Vagina (tissue), 2 donors: ENCODE measurements at regions of chr10 and their contacts with region 1.

Region 1: DNA sequence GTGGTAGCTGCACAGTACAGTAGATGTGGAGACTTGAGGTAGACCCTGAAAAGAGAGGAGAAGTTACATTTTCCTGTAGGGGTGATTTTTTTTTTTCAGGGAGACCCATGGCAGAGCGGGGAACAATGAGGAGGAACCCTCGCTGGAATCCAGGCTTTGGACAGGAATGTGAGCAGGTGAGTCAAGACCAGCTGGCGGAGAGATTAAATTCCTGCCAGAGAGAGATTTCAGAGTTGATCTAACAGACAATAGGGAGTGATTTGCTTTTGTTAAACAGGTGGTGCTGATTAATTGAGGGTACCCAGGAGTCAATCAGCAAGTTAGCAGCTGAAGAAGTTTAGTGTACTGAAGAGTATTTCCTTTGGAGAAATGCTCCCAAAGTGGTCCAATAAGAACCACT is 41.6 kb upstream of the MINDY3 start:
- DNase-seq: no peak
- H3K4me3 ChIP-seq: no peak overlapping the region
- H3K27ac ChIP-seq: no peak overlapping the region
- H3K4me1 ChIP-seq: no peaks in the 10 kb centered on the region
- H3K27me3 ChIP-seq: no peaks in the 10 kb centered on the region
- CTCF ChIP-seq: no peak
- POLR2A ChIP-seq: no peak

Region 2: GRCh38 chr10:14459665-14460064 is 1442.2 kb before region 1 on chr10:
- intact Hi-C with region 1: loop called (anchors 5 kb)
- DNase-seq: no peak
- H3K4me3 ChIP-seq: no peak overlapping the region
- H3K27ac ChIP-seq: no peak overlapping the region
- H3K4me1 ChIP-seq: no peaks in the 10 kb centered on the region
- H3K27me3 ChIP-seq: no peaks in the 10 kb centered on the region
- CTCF ChIP-seq: no peak
- POLR2A ChIP-seq: no peak

Region 3: GRCh38 chr10:14560274-14560673 is 1341.6 kb before region 1 on chr10:
- intact Hi-C with region 1: no loop called
- DNase-seq: no peak
- H3K4me3 ChIP-seq: no peak overlapping the region
- H3K27ac ChIP-seq: no peak overlapping the region
- H3K4me1 ChIP-seq: peaks cover 37% of the 10 kb centered on the region
- H3K27me3 ChIP-seq: no peaks in the 10 kb centered on the region
- CTCF ChIP-seq: no peak
- POLR2A ChIP-seq: no peak

Region 4: DNA sequence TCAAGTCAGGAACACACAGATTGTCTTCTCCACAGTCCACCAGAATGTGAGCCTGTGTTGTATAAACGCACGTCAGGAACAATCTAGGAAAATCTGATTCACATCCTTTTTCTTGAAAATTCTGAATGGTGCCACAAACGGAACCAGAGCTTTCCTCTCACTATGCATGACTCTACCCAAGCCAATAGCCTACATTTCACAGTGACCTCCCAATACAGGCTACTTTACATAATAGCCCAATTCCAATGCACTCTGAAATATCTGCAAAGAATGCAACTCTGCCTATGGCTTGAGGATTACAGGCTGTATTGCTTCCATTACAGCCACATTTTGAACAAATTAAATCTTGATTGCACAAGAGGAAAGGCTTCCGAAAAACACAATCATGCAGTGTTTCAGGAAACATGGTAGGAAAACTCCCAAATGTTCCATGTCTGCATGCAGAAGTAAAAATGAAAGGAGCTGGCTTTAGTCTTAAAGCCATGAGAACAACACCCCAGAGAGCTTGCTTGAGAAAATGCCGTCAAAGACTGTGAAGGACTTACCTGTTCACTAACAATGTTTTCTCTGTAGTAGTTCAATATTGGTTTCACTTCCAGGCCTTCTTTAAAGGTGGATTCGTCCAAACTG is 296.0 kb before region 1 on chr10:
- intact Hi-C with region 1: no loop called
- DNase-seq: no peak
- H3K4me3 ChIP-seq: no peak overlapping the region
- H3K27ac ChIP-seq: no peak overlapping the region
- H3K4me1 ChIP-seq: peaks cover 9% of the 10 kb centered on the region
- H3K27me3 ChIP-seq: no peaks in the 10 kb centered on the region
- CTCF ChIP-seq: no peak
- POLR2A ChIP-seq: no peak